ENCODE measurements at regions of chr9 and their contacts with region 1.

Region 1: DNA sequence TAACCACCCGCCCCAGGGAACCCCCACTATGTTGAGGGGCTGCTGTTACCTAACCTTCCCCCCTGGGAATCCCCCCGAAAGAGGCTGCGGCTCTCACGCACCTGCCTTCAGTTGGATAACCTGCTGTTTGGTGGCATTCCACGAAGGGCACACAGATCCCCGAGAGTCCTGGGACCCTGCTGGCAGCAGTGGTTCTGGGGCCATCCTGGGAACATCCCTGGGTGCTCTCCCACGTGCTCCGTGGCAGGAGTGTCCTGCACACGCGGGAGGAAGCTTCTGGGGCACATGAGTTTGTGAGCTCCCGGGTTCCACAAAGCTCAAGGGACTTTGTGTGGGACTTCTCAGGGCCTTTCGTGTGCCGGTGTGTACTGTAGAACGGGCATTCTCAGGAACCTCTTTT is 102.3 kb downstream of the RXRA start:
- DNase-seq: no peak
- ATAC-seq: no peak
- H3K4me3 ChIP-seq: no peak overlapping the region
- H3K27ac ChIP-seq: no peak overlapping the region
- H3K4me1 ChIP-seq: no peaks in the 10 kb centered on the region
- H3K27me3 ChIP-seq: no peaks in the 10 kb centered on the region
- CTCF ChIP-seq: no peak

Region 2: DNA sequence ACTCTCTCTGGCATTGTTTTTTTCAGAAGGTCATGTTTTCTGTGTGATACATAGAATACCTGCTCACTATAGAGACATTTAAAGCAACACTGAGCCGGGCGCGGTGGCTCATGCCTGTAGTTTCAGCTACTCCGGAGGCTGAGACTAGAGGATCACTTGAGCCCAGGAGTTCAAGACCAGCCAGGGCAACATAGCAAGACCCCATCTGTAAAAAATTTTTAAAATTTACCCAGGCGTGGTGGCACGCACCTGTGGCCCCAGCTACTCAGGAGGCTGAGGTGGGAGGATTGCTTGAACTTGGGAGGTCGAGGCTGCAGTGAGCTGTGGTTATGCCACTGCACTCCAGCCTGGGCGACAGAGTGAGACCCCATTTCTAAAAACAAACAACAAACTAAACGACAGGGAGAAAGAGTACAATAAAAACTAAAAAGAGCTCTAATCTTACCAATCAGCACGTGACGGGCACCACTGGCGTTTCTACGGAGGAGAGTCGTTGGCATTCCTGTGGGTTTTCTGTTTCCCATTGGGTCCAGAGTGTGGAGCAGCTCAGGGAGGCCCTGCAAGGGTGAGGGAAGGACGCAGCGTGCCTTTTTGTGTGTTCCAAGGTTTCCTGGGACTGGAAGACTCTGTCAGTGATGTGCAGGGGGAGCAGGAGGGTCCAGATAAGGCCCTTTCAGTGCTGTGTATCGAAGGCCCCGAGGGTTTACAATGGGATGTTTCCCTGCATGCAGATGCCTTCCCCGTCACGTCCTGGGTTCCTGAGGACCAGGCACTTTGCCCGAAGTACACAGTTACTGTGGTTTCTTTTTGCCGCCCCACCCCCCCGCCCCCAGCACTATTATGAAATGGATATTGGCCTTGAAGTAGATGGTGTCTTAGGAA is 257.0 kb before region 1 on chr9:
- CTCF ChIA-PET with region 1: no interaction called
- POLR2A ChIA-PET with region 1: interaction called, 10 read pairs
- intact Hi-C with region 1: no loop called
- DNase-seq: no peak
- ATAC-seq: no peak
- H3K4me3 ChIP-seq: no peak overlapping the region
- H3K27ac ChIP-seq: no peak overlapping the region
- H3K4me1 ChIP-seq: no peaks in the 10 kb centered on the region; the same call in 1 of the 2 replicates
- H3K27me3 ChIP-seq: peaks cover 5% of the 10 kb centered on the region
- CTCF ChIP-seq: no peak

Region 3: GRCh38 chr9:134226221-134226930 is 202.2 kb before region 1 on chr9:
- CTCF ChIA-PET with region 1: no interaction called
- POLR2A ChIA-PET with region 1: no interaction called
- intact Hi-C with region 1: no loop called
- DNase-seq: no peak
- ATAC-seq: no peak
- H3K4me3 ChIP-seq: no peak overlapping the region
- H3K27ac ChIP-seq: no peak overlapping the region
- H3K4me1 ChIP-seq: no peaks in the 10 kb centered on the region
- H3K27me3 ChIP-seq: peaks cover 18% of the 10 kb centered on the region; the same call in 1 of the 2 replicates
- CTCF ChIP-seq: no peak